BJ (cell line): ENCODE measurements at regions of chr18 and their contacts with region 1.

Region 1: GRCh38 chr18:54983041-54983686 is 23.9 kb upstream of the CCDC68 start:
- DNase-seq: peak; percentile 10
- H3K4me3 ChIP-seq: no peak overlapping the region
- H3K27me3 ChIP-seq: no peaks in the 10 kb centered on the region; the same call in 1 of the 2 replicates
- CTCF ChIP-seq: peak; percentile 51

Region 2: DNA sequence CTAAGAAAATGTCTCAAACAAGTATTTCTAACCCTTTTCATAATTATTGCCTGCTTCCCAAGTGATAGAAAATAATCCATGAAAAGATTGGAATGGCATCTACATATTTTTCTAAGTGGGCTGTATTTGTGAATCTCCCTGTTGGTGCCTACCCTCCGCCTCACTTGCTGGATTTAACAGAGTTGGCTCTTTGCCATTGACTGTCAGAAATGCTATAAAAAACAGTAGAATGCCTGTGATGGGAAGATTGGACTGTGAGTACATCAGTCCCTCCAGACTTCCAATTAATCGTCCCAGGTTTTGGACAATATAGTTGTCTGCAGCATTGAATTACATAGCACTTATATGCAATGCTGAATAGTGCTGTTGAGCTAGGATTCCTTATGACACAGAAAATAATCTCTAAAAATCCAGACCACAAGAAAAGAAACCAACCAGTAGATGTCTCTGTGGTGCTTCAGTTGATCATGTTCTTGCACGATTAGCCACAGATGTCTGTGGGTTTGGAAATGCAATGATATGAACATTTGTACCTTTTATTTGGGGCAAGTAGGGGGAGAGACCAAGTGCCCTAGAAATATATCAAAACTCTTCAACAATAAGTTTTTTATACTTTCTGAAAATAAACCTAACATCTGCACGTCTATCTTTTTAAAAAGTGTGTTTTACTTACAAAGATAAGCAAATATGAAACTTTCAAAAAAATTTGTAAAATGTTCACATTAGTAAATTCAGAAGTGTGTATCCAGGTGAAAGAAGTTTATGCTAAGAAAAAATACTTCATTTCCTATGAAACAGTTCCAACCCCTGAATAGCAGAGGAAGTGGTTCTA is 303.6 kb before region 1 on chr18:
- CTCF ChIA-PET with region 1: interaction called, 45 read pairs
- POLR2A ChIA-PET with region 1: interaction called, 3 read pairs
- DNase-seq: peak; percentile 32
- H3K4me3 ChIP-seq: no peak overlapping the region
- H3K27me3 ChIP-seq: no peaks in the 10 kb centered on the region
- CTCF ChIP-seq: peak; percentile 59

Region 3: GRCh38 chr18:54684784-54685183 is 298.4 kb before region 1 on chr18:
- CTCF ChIA-PET with region 1: interaction called, 45 read pairs
- POLR2A ChIA-PET with region 1: interaction called, 3 read pairs
- DNase-seq: no peak
- H3K4me3 ChIP-seq: no peak overlapping the region
- H3K27me3 ChIP-seq: no peaks in the 10 kb centered on the region
- CTCF ChIP-seq: no peak